RWPE1 (cell line): ENCODE measurements at regions of chr2 and their contacts with region 1.

Region 1: GRCh38 chr2:209977386-209978239 is 24.8 kb upstream of the RPE start:
- DNase-seq: peak; percentile 30
- H3K27ac ChIP-seq: no peak overlapping the region
- CTCF ChIP-seq: peak; percentile 64

Region 2: GRCh38 chr2:210199186-210199765 is 221.7 kb after region 1 on chr2:
- CTCF ChIA-PET with region 1: interaction called, 10 read pairs
- POLR2A ChIA-PET with region 1: no interaction called
- DNase-seq: peak; percentile 35
- H3K27ac ChIP-seq: no peak overlapping the region
- CTCF ChIP-seq: peak; percentile 66